Astrocyte of the cerebellum (primary cell): ENCODE measurements at regions of chr10 and their contacts with region 1.

Region 1: DNA sequence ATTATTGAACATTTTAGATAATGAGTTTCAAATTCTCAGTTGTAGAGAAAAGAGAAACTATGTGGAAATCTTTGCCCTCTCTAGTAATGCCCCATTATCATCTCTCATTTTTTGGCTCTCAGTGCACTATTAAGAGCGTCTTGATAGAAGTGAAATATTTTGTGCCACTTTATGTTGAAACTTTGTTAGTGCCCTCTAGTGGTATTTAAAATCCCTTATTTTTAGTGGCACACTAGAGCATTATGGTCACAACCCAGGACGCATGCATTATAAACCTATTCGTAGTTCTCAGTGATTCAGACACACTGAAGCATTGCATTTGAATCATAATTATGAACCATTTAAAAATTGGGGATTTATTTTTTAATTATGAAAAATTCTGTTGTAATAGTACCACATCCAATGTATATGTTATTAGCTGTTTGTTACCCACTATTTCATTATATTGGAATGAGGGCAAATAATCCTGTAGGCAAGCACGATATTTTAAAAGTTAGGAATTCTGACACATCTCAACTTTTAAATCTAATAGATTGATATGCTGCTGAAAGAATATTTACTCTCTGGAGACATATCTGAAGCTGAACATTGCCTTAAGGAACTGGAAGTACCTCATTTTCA is 21.9 kb downstream of the PDCD4 start:
- DNase-seq: no peak
- H3K4me3 ChIP-seq: no peak overlapping the region
- CTCF ChIP-seq: peak; percentile 39

Region 2: DNA sequence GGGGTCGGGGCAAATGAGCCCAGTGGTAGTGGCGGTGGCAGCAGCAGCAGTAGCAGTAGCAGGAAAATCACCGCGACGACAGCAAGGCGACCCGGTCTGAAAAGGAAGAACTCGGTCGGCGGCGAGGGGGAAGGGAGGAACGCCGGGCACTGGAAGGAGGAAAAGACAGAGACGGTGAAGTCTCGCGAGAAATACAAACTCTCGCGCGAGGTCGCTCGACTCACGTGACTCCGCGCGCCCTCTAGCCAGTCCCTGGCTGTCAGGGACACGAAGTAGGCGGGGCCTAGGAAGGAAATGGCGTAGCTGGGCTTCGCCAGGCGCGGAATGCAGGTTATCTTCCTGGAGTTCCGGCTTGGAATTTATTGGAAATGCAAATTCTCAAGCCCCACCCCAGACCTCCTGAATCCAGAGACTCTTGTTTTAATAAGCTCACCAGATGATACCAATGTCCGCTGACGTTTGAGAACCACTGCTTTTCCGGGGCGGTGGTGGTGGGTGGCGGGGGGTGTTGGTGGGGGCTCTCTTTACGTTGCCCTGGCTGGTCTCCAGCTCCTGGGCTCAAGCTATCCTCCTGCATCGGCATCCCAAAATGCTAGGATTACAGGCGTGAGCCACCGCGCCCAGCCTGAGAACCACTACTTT is 588.8 kb before region 1 on chr10 and contains the start of gene SMNDC1:
- in situ Hi-C with region 1: loop called (anchors 25 kb)
- DNase-seq: peak; percentile 96
- H3K4me3 ChIP-seq: peak within 1 kb of the TSS; percentile 70
- CTCF ChIP-seq: no peak

Region 3: DNA sequence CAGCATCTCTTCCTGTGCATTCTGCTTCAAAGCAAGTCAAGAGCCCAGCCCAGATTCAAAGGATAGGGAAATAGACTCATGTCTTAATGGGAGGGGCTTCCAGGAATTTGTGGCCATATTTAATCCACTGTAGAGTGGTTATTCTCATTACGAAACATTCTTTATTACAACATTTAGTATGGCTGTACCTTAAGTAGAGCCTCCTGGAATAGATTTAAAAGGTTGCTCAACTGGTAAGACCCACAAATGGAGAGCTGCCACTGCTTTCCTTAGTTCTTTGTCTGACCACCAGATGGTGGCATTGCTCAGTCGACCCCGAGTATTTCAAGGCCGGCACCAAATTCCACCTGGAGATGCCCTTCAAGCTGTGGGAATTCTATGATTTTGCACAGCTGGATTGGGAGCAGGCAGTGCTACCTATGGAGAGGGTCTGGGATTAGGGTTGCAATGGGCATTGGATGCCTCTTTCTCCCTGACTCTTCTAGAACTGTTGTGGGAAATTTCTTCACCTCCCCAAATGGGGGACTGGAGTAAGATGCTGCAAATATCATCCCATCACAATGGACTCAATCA is 147.3 kb before region 1 on chr10:
- in situ Hi-C with region 1: loop called (anchors 25 kb)
- DNase-seq: peak; percentile 68
- H3K4me3 ChIP-seq: no peak overlapping the region
- CTCF ChIP-seq: peak; percentile 73